PC-3 (cell line): ENCODE measurements at regions of chr15 and their contacts with region 1.

Region 1: DNA sequence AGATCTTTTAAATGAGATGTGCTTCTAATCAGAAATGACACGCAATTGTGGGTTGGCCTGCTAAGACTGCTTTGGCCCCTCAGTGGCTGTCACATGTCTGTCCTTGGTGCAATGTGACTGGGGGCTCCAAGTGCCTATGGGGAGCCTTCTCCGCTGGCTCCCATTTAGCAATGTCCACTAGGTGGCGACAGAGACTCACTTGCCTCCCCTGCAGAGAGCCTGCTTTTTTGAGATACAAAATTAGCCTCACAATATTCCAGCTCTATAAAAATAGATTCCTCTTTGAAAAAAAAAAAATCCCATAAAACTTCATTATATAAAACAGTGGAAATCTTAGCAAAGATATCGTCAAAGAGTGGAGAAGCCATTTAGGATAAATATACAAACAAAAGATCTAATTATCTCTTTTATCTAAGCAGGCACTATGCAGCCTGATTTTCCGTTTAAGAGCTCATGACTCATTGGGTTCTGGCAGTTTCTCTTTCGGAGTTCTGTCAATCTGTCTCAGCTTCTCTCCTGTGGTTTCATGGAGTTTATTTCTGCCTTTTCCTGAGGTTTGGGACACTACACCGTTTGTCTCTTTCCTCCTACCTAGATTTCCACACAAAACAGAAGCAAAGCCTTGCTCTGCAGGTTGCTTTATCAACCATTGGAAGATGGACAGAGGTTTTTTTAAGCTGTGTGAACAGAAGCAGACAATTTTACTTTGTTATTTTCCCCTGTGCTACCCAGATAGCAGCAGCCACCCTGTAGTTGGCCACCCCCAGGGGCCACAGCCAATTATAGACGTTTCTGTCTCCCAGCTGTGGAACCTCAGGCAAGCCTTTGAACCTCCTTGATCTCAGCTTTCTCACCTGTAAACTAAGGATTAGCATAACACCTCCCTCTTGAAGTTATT is 68.4 kb upstream of the TNFAIP8L3 start:
- DNase-seq: peak; percentile 75
- ATAC-seq: peak; percentile 91
- H3K4me3 ChIP-seq: peak overlapping the region; percentile 56
- H3K27ac ChIP-seq: no peak overlapping the region
- H3K4me1 ChIP-seq: peaks cover 6% of the 10 kb centered on the region
- H3K27me3 ChIP-seq: no peaks in the 10 kb centered on the region
- CTCF ChIP-seq: peak; percentile 92

Region 2: DNA sequence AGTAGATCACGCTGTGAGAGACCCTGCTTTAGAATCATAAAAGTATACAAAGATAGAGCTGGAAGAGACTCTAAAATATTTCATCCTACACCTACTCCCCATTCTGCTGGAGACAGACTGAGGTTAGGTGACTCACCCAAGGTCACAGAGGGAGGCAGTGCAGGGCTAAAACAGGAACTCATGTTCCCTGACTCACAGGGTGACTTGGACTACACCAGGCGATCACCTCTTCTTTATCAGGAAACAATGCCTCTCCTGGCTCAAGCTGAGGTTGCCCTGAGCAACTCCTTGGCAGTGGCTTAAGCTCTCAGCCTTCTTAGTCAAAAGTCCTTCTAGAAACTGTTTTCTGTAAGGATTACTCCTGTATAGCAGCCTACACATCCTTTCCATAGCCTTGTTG is 42.0 kb before region 1 on chr15:
- CTCF ChIA-PET with region 1: no interaction called
- POLR2A ChIA-PET with region 1: no interaction called
- intact Hi-C with region 1: no loop called
- DNase-seq: peak; percentile 91
- ATAC-seq: peak; percentile 100
- H3K4me3 ChIP-seq: no peak overlapping the region
- H3K27ac ChIP-seq: no peak overlapping the region
- H3K4me1 ChIP-seq: peaks cover 14% of the 10 kb centered on the region
- H3K27me3 ChIP-seq: no peaks in the 10 kb centered on the region
- CTCF ChIP-seq: 0 out of 2 replicates have a peak, but pooled peaks have one; percentile 12

Region 3: GRCh38 chr15:51192521-51193280 is 29.6 kb after region 1 on chr15:
- CTCF ChIA-PET with region 1: interaction called, 51 read pairs
- POLR2A ChIA-PET with region 1: no interaction called
- intact Hi-C with region 1: loop called (anchors 1 kb)
- DNase-seq: peak; percentile 89
- ATAC-seq: peak; percentile 87
- H3K4me3 ChIP-seq: no peak overlapping the region
- H3K27ac ChIP-seq: no peak overlapping the region
- H3K4me1 ChIP-seq: peaks cover 6% of the 10 kb centered on the region; the same call in 1 of the 2 replicates
- H3K27me3 ChIP-seq: peaks cover 35% of the 10 kb centered on the region
- CTCF ChIP-seq: peak; percentile 86

Region 4: GRCh38 chr15:51281368-51281967 is 118.4 kb after region 1 on chr15:
- CTCF ChIA-PET with region 1: interaction called, 7 read pairs
- POLR2A ChIA-PET with region 1: no interaction called
- intact Hi-C with region 1: loop called (anchors 2 kb)
- DNase-seq: peak; percentile 63
- ATAC-seq: peak; percentile 90
- H3K4me3 ChIP-seq: no peak overlapping the region
- H3K27ac ChIP-seq: no peak overlapping the region
- H3K4me1 ChIP-seq: no peaks in the 10 kb centered on the region
- H3K27me3 ChIP-seq: peaks cover 33% of the 10 kb centered on the region
- CTCF ChIP-seq: peak; percentile 70

Region 5: GRCh38 chr15:51401872-51402517 is 238.9 kb after region 1 on chr15:
- CTCF ChIA-PET with region 1: interaction called, 8 read pairs
- POLR2A ChIA-PET with region 1: no interaction called
- intact Hi-C with region 1: loop called (anchors 1 kb)
- DNase-seq: peak; percentile 54
- ATAC-seq: peak; percentile 41; the same call in 1 of the 2 replicates
- H3K4me3 ChIP-seq: no peak overlapping the region
- H3K27ac ChIP-seq: no peak overlapping the region
- H3K4me1 ChIP-seq: peaks cover 22% of the 10 kb centered on the region
- H3K27me3 ChIP-seq: peaks cover 3% of the 10 kb centered on the region; the same call in 1 of the 2 replicates
- CTCF ChIP-seq: peak; percentile 72

Region 6: GRCh38 chr15:51499379-51499976 is 336.4 kb after region 1 on chr15:
- CTCF ChIA-PET with region 1: interaction called, 4 read pairs
- POLR2A ChIA-PET with region 1: no interaction called
- intact Hi-C with region 1: loop called (anchors 5 kb)
- DNase-seq: peak; percentile 60
- ATAC-seq: peak; percentile 71
- H3K4me3 ChIP-seq: no peak overlapping the region
- H3K27ac ChIP-seq: no peak overlapping the region
- H3K4me1 ChIP-seq: peaks cover 12% of the 10 kb centered on the region
- H3K27me3 ChIP-seq: no peaks in the 10 kb centered on the region
- CTCF ChIP-seq: peak; percentile 77